ENCODE measurements at regions of chr19 and their contacts with region 1.

Region 1: DNA sequence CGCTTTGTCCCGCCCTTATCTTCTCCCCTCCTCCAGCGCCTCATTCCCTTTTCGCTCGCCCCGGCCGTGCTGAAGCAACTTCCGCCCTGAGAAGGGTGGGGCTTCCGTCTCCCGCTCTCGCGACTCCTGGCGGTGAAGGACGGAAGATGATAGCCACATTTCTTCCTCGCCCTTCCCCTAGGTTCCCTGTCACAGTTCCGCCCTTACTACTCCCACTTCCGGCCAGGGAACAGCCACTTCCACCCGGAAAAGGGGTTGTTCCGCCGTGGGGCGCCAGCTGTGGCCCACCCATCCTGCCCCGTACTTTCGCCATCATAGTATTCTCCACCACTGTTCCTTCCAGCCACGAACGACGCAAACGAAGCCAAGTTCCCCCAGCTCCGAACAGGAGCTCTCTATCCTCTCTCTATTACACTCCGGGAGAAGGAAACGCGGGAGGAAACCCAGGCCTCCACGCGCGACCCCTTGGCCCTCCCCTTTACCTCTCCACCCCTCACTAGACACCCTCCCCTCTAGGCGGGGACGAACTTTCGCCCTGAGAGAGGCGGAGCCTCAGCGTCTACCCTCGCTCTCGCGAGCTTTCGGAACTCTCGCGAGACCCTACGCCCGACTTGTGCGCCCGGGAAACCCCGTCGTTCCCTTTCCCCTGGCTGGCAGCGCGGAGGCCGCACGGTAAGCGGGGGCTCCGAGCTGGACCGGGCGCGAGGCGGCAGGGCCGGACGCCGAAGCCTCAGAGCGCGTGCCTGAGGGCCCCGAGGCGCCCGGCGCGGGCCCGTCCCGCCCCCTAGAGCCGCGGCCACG is at the start of gene RPS19:
- DNase-seq: peak; percentile 98
- H3K4me3 Mint-ChIP-seq: peak within 1 kb of the TSS; percentile 82
- H3K27ac Mint-ChIP-seq: peak within 1 kb of the TSS; percentile 94
- H3K4me1 Mint-ChIP-seq: peaks cover 45% of the 10 kb centered on the region
- H3K27me3 Mint-ChIP-seq: peaks cover 2% of the 10 kb centered on the region
- total RNA-seq, gene RPS19: 2,625 to 2,652 TPM

Region 2: DNA sequence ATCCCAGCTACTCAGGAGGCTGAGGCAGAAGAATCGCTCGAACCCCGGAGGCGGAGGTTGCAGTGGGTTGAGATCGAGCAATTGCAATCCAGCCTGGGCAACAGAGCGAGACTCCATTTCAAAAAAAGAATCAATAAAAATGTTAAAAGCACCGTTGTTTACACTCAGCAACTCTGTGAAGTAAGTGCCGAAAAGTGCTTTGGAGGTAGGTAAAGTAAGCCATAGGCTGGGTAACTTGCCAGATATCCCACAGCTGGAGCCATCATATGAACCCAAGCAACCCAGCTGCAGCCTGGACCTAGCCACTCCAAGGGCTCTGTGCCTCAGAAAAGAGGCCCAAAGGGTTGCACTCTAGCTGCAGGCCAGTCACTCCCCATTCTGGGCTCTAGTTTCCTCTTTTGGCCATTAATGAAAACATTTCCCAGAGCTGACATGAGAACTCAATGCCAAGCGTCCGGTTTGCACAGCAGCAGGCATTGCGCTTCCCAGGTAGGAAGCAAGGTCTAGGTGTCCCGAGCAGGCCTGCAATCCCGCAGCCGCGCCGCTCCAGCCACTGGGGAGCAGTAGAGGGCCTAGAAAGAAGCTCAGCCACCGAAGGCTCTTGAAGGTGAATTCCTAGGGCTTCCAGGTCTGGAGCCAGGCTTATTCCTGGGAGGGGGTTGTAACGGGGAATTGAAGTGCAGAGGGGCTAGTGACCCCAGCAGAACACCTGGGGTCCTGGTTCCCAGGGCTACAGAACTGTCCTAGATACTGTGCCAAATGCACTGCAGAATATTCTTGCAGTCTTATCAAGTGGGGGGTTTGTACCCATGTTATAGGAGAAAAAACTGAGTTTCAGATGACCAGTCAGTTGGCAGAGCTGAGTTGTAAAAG is 13.2 kb after region 1 on chr19:
- CTCF ChIA-PET with region 1: interaction called, 82 read pairs
- POLR2A ChIA-PET with region 1: interaction called, 223 read pairs
- DNase-seq: peak; percentile 70
- H3K4me3 Mint-ChIP-seq: no peak overlapping the region
- H3K27ac Mint-ChIP-seq: peak overlapping the region; percentile 93
- H3K4me1 Mint-ChIP-seq: peaks cover 91% of the 10 kb centered on the region
- H3K27me3 Mint-ChIP-seq: no peaks in the 10 kb centered on the region

Region 3: GRCh38 chr19:41892173-41892902 is 32.5 kb after region 1 on chr19:
- CTCF ChIA-PET with region 1: interaction called, 23 read pairs
- POLR2A ChIA-PET with region 1: interaction called, 384 read pairs
- DNase-seq: no peak
- H3K4me3 Mint-ChIP-seq: no peak overlapping the region
- H3K27ac Mint-ChIP-seq: no peak overlapping the region
- H3K4me1 Mint-ChIP-seq: peaks cover 58% of the 10 kb centered on the region
- H3K27me3 Mint-ChIP-seq: no peaks in the 10 kb centered on the region

Region 4: GRCh38 chr19:41911889-41912731 is 52.3 kb after region 1 on chr19:
- CTCF ChIA-PET with region 1: no interaction called
- POLR2A ChIA-PET with region 1: interaction called, 10 read pairs
- DNase-seq: no peak
- H3K4me3 Mint-ChIP-seq: no peak overlapping the region
- H3K27ac Mint-ChIP-seq: no peak overlapping the region
- H3K4me1 Mint-ChIP-seq: peaks cover 15% of the 10 kb centered on the region
- H3K27me3 Mint-ChIP-seq: peaks cover 39% of the 10 kb centered on the region

Region 5: GRCh38 chr19:41951686-41952172 is 91.9 kb after region 1 on chr19:
- CTCF ChIA-PET with region 1: interaction called, 32 read pairs
- POLR2A ChIA-PET with region 1: interaction called, 33 read pairs
- DNase-seq: peak; percentile 88
- H3K4me3 Mint-ChIP-seq: no peak overlapping the region
- H3K27ac Mint-ChIP-seq: peak overlapping the region; percentile 19
- H3K4me1 Mint-ChIP-seq: peaks cover 16% of the 10 kb centered on the region
- H3K27me3 Mint-ChIP-seq: no peaks in the 10 kb centered on the region

Measured in activated CD4-positive, alpha-beta memory T cell treated with anti-CD3 and anti-CD28 coated beads, Interleukin-2, amount 10 ng/mL, durations not matched to agents 7 days and 5 days (primary cell).